ENCODE measurements at regions of chr4 and their contacts with region 1.

Region 1: GRCh38 chr4:85376285-85376684 is 98.7 kb upstream of the ARHGAP24 start:
- DNase-seq: no peak
- ATAC-seq: no peak
- H3K4me3 ChIP-seq: no peak overlapping the region
- H3K27ac ChIP-seq: no peak overlapping the region
- H3K4me1 ChIP-seq: no peaks in the 10 kb centered on the region
- H3K27me3 ChIP-seq: no peaks in the 10 kb centered on the region
- CTCF ChIP-seq: no peak

Region 2: GRCh38 chr4:85741921-85742591 is 365.8 kb after region 1 on chr4:
- intact Hi-C with region 1: loop called in 5 of 10 experiments (anchors 5 to 10 kb)
- DNase-seq: peak; percentile 36 to 39
- ATAC-seq: peak in 6 of 8 donors; percentile 34 to 82 (median 46)
- H3K4me3 ChIP-seq: no peak overlapping the region
- H3K27ac ChIP-seq: peak overlapping the region in 6 of 10 donors; percentile 15 to 89 (median 32)
- H3K4me1 ChIP-seq: peaks cover 0 to 62% (median 19%) of the 10 kb centered on the region in 9 donors
- H3K27me3 ChIP-seq: no peaks in the 10 kb centered on the region
- CTCF ChIP-seq: no peak

Region 3: GRCh38 chr4:85919200-85919887 is 543.1 kb after region 1 on chr4:
- intact Hi-C with region 1: no loop called
- DNase-seq: no peak
- ATAC-seq: no peak
- H3K4me3 ChIP-seq: no peak overlapping the region
- H3K27ac ChIP-seq: no peak overlapping the region
- H3K4me1 ChIP-seq: no peaks in the 10 kb centered on the region
- H3K27me3 ChIP-seq: no peaks in the 10 kb centered on the region
- CTCF ChIP-seq: no peak

Measured in heart right ventricle (tissue), 16 donors.